Dendritic cell treated with granulocyte-macrophage colony-stimulating factor and Interleukin-4, amounts not matched to agents 40 ng/mL and 50 ng/mL, for 4 days (primary cell): ENCODE measurements at regions of chr14 and their contacts with region 1.

Region 1: DNA sequence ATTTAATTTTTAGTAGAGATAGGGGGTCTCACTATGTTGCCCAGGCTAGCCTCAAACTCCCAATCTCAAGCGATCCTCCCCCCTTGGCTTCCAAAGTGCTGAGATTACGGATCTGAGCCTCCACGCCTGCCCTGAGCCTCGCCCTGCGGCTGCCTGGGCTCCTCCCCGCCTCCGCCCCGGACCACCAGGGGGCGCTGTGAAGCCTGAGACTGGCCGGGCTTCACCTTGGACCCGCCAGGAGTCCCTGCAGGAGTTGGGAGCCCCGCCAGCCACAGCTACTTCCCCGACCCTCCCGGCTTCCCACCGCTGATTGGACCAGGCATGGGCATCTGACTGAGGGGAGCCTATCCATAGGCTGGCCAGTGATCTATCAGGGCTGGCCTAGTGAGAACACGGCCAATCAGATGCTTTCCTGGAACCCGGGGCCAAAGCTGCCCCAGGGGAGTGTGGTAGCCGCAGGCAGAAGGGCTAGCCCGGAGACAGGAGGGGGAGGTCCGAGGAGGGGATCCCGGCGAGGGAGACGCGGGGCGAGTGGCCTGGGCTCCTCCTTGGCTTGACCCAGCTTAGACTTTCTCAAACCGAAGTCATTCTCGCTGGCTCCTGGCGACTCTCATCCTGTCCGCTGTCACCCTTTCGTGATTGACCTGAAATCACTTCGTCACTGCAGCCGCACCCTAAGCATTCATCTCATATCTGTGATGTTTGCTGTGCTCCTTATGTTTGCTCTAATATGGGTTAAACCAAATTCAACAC is 15.1 kb upstream of the ANKRD9 start:
- H3K4me3 Mint-ChIP-seq: peak overlapping the region; percentile 90
- H3K27ac Mint-ChIP-seq: peak overlapping the region; percentile 93
- H3K4me1 Mint-ChIP-seq: peaks cover 39% of the 10 kb centered on the region
- H3K27me3 Mint-ChIP-seq: peaks cover 17% of the 10 kb centered on the region

Region 2: GRCh38 chr14:102555264-102555831 is 30.7 kb after region 1 on chr14:
- intact Hi-C with region 1: loop called (anchors 1 kb)
- H3K4me3 Mint-ChIP-seq: peak overlapping the region; percentile 73
- H3K27ac Mint-ChIP-seq: peak overlapping the region; percentile 82
- H3K4me1 Mint-ChIP-seq: peaks cover 11% of the 10 kb centered on the region
- H3K27me3 Mint-ChIP-seq: peaks cover 8% of the 10 kb centered on the region